ENCODE measurements at regions of chr12 and their contacts with region 1.

Region 1: DNA sequence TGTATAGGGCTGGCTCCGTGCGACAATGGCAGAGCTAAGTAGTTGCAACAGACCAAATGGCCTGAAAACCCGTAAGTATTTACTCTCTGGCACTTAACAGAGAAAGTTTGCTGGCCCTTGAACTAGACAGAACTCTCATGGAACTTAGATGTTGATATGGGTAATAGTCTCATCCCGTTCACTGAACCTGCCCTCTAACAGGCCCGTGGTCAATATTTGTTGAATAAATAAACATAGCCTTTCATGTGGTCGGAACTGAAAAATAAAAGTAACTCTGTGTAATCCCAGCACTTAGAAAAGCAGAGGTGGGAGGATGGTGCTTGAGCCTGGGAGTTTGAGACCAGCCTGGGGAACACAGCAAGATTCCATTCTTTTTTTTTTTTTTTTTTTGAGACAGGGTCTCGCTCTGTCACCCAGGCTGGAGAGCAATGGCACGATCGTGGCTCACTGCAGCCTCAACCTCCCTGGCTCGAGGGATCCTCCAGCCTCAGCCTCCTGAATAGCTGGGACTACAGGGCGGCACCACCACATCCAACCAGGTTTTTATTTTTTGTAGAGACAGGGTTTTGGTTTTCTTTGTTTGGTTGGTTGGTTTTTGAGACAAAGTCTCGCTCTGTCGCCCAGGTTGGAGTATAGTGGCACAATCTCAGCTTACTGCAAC is 29.7 kb downstream of the KDM2B start:
- DNase-seq: no peak
- H3K4me3 ChIP-seq: no peak overlapping the region
- CTCF ChIP-seq: no peak

Region 2: GRCh38 chr12:121476477-121476876 is 74.6 kb before region 1 on chr12:
- CTCF ChIA-PET with region 1: no interaction called
- POLR2A ChIA-PET with region 1: no interaction called
- DNase-seq: no peak
- H3K4me3 ChIP-seq: no peak overlapping the region
- CTCF ChIP-seq: no peak

Region 3: GRCh38 chr12:121530600-121531355 is 20.3 kb before region 1 on chr12:
- CTCF ChIA-PET with region 1: interaction called, 11 read pairs
- POLR2A ChIA-PET with region 1: no interaction called
- DNase-seq: peak; percentile 33
- H3K4me3 ChIP-seq: no peak overlapping the region
- CTCF ChIP-seq: no peak

Region 4: GRCh38 chr12:121568971-121569751 is 18.1 kb after region 1 on chr12:
- CTCF ChIA-PET with region 1: interaction called, 49 read pairs
- POLR2A ChIA-PET with region 1: no interaction called
- DNase-seq: no peak
- H3K4me3 ChIP-seq: no peak overlapping the region
- CTCF ChIP-seq: no peak

Region 5: DNA sequence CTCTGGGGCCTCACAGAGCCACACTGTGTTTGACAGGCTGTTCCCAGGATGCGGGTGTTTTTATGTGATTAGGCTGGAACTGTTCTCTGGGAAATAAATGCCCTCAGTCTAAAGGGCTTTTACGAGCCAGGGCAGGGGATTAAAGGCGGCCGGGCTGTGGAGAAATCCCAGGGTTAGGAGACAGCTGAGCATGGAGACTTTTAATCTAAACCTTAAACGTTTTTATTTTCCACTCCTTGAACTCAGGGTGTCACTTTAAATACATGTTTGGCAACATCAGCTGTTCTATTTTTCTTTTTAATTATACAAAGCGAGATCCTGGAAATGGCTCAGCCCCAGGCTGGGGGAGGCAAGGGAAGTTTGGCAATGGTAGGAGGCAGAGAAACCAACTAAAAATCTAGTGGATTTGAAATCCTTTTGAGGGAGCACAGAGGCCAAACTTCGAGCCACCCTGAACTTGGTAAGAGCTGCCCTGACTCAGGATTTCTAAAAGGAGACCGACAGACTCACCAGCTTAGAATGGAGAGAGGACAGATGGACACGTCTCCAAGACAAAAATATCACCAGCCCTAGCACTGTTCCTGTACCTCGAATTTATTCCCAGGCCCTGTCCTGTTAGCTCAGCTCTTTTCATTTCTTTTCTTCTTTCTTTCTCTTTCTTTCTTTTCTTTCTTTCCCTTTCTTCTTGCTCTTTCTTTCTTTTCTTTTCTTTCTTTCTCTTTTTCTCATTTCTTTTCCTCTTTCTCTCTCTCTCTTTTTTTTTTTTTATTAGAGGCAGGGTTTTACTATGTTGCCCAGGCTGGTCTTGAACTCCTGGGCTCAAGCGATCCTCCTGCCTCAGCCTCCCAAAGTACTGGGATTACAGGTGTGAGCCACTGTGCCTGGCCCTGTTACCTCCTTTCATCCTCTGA is 59.4 kb after region 1 on chr12:
- CTCF ChIA-PET with region 1: interaction called, 10 read pairs
- POLR2A ChIA-PET with region 1: no interaction called
- DNase-seq: no peak
- H3K4me3 ChIP-seq: no peak overlapping the region
- CTCF ChIP-seq: no peak

Region 6: DNA sequence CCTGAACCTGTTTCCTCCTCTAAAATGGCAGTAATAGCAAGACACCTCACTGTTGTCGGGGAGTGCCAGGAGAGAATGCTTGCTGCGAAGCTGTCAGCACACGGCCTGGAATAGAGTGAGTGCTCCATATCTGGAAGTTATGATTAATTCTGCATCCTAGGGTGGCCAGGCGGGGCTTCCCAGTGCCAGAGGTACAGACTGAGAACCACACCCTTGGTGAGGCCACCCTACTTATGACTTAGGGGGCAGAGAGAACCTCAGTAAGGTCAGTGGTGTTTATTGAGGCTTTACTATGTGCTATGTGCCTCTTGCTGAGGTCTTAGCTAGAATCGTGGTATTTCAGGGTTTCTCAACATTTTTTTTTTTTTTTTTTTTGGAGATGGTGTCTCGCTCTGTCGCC is 98.2 kb after region 1 on chr12:
- CTCF ChIA-PET with region 1: interaction called, 11 read pairs
- POLR2A ChIA-PET with region 1: no interaction called
- DNase-seq: no peak
- H3K4me3 ChIP-seq: no peak overlapping the region
- CTCF ChIP-seq: no peak

Region 7: DNA sequence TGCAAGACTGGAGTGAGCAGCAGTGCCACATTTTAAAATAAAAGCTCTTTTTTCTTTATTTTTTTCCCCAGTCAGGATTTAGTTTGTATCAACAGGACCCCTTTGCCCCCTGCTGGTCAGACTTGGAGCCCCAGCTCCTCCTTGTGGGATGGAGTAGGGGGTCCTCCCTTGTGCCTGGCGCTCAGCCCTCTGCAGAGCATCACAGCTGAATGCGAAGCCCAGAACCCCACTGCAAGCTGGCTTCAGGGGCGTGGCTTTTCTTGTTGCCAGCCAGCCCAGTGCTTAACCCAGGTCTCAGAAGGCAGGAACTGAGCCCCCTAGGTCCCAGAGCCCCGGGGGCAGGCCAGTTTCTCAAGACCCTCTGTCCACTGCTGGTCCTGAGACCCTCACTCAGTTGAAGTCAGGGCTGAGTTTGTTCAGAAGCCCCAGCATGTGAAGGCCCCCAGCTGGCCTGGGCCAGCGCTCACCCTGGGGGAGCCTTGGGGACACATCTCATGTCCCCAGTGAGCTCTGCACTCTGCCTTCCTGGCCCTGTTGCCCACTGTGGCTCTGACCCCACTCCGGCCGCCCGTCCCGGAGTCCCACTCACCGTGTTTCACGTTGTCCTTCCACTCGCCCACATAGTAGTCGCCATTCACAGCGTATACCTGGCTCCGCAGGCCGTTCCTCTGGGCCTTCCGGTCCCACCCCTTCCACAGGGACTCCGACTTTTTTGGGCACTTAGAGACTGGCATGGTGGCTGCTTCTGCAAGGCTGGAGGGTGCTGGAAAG is 117.8 kb after region 1 on chr12:
- CTCF ChIA-PET with region 1: interaction called, 287 read pairs
- POLR2A ChIA-PET with region 1: interaction called, 9 read pairs
- DNase-seq: no peak
- H3K4me3 ChIP-seq: no peak overlapping the region
- CTCF ChIP-seq: peak; percentile 61

Region 8: DNA sequence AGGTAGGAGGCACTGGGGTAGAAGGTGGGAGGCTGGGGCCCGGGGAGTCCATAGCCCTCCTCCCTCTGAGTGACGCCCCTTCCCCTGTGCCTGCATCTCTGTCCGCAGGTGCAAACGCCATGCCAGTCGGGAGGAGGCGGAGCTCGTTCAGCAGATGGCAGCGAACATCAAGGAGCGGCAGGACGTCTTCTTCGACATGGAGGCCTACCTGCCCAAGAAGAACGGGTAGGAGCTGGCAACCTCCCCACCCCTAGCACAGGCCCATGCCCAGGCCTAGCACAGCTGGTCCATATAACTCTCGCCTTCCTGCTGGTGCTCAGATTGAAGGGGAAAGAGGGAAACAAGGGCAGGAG is 197.1 kb after region 1 on chr12:
- CTCF ChIA-PET with region 1: no interaction called
- POLR2A ChIA-PET with region 1: no interaction called
- DNase-seq: no peak
- H3K4me3 ChIP-seq: no peak overlapping the region
- CTCF ChIP-seq: no peak

Measured in AG04449 (cell line).